Naive thymus-derived CD4-positive, alpha-beta T cell (primary cell): ENCODE measurements at regions of chr5 and their contacts with region 1.

Region 1: GRCh38 chr5:80216753-80217596 is 38.9 kb downstream of the SERINC5 start:
- DNase-seq: peak in 1 of 9 donors; percentile 58
- ATAC-seq: no peak
- H3K4me3 ChIP-seq: peak overlapping the region; percentile 35
- H3K4me3 Mint-ChIP-seq: peak overlapping the region; percentile 45 to 89 (median 81)
- H3K27ac ChIP-seq: peak overlapping the region; percentile 63
- H3K27ac Mint-ChIP-seq: peak overlapping the region in 8 of 9 donors; percentile 83 to 99 (median 93)
- H3K4me1 ChIP-seq: peaks cover 15 to 87% of the 10 kb centered on the region in 2 donors
- H3K4me1 Mint-ChIP-seq: peaks cover 57 to 100% (median 91%) of the 10 kb centered on the region in 7 donors
- H3K27me3 ChIP-seq: no peaks in the 10 kb centered on the region
- H3K27me3 Mint-ChIP-seq: no peaks in the 10 kb centered on the region

Region 2: DNA sequence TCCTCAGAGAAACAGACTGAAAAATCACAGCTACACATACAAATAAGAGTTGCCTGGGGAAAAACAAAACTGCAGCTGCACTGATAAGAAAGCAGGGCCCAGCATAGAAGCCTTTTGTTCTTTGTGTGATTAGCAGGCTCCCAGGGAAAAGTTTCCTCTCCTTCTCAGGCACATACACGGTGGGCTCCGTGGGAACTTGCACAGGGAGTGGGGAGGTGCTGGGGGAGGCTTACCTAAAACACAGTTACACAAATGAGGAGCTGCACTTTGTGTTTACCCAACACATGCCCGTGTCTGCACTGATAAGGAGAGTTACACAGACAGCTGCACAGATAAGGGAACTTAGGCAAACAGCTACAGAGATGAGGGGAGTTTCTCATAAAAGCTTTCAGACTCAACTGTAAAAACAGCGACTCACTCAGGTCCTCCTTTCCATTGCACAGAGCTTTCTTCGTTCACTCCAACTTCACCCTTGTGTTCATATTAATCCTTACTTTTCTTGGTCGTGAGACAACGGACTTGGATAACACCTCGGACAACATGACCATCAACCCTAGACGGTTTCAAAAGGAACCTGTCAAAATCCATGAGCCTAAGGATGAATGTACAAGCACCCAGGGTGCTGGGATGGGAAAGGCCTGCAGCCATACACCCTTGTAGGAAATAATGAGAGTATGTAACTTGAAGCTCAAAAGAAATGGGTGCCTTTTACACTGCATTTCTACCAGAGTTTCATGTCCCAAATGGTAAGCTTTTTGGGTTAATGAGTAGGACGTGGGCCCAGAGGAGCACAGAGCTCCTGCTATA is 12.0 kb before region 1 on chr5:
- CTCF ChIA-PET with region 1: interaction called, 15 read pairs
- POLR2A ChIA-PET with region 1: interaction called, 18 read pairs
- intact Hi-C with region 1: loop called in 1 of 2 experiments (anchors 2 kb)
- DNase-seq: peak in 6 of 9 donors; percentile 44 to 59 (median 49)
- ATAC-seq: peak; percentile 88
- H3K4me3 ChIP-seq: no peak overlapping the region
- H3K4me3 Mint-ChIP-seq: peak overlapping the region in 9 of 10 donors; percentile 58 to 82 (median 73)
- H3K27ac ChIP-seq: peak overlapping the region; percentile 54
- H3K27ac Mint-ChIP-seq: peak overlapping the region; percentile 46 to 99 (median 90)
- H3K4me1 ChIP-seq: peaks cover 10 to 74% of the 10 kb centered on the region in 2 donors
- H3K4me1 Mint-ChIP-seq: peaks cover 45 to 99% (median 91%) of the 10 kb centered on the region in 7 donors
- H3K27me3 ChIP-seq: no peaks in the 10 kb centered on the region
- H3K27me3 Mint-ChIP-seq: no peaks in the 10 kb centered on the region

Region 3: GRCh38 chr5:80229902-80230255 is 12.9 kb after region 1 on chr5:
- CTCF ChIA-PET with region 1: no interaction called
- POLR2A ChIA-PET with region 1: interaction called, 4 read pairs
- intact Hi-C with region 1: loop called in 1 of 2 experiments (anchors 1 kb)
- DNase-seq: no peak
- ATAC-seq: no peak
- H3K4me3 ChIP-seq: no peak overlapping the region
- H3K4me3 Mint-ChIP-seq: peak overlapping the region in 8 of 10 donors; percentile 26 to 72 (median 60)
- H3K27ac ChIP-seq: peak overlapping the region; percentile 34
- H3K27ac Mint-ChIP-seq: peak overlapping the region in 7 of 9 donors; percentile 43 to 91 (median 71)
- H3K4me1 ChIP-seq: peaks cover 10 to 56% of the 10 kb centered on the region in 2 donors
- H3K4me1 Mint-ChIP-seq: peaks cover 58 to 92% (median 80%) of the 10 kb centered on the region in 7 donors
- H3K27me3 ChIP-seq: no peaks in the 10 kb centered on the region
- H3K27me3 Mint-ChIP-seq: no peaks in the 10 kb centered on the region

Region 4: DNA sequence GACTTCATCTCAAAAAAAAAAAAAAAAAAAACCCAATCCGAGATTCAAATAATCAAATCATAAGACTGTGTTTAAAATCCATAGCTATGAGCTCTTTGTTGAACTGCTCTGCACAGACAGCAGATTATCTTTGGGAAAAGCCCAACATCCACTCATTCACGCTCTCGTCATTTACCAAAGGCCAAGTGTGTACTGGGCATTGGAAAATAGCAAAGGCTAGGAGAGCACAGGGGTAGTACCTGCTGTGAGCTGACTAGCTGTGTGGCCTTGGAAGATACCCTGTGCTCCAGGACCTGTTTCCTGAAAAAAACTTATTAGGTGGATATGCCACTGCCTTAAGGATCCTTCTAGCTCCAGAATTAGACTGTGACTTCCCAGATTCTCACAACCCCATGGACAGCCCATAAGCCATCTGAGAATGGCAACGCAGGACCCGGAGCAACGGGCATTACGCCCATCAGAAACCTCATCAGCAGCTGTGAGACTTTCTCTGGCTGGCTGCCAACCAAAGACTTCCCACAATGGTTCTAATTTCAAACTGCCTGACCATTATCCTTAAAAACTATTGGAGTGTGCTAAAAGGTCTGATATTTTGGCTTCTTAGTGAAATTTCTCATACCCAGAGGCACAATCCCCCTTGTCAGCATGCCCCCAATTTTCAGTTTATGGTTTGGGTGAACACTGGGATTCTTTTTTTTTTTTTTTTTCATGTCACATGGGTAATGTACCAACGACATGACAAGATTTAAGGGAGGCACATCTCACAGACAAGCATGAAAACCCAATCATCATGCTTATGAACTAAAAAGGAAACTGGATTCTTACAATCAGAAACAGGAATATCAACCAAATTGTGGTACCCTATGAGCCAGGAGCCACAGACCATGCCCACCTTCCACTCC is 22.1 kb after region 1 on chr5:
- CTCF ChIA-PET with region 1: no interaction called
- POLR2A ChIA-PET with region 1: interaction called, 4 read pairs
- intact Hi-C with region 1: loop called in 1 of 2 experiments (anchors 2 kb)
- DNase-seq: no peak
- ATAC-seq: no peak
- H3K4me3 ChIP-seq: no peak overlapping the region
- H3K4me3 Mint-ChIP-seq: peak overlapping the region in 9 of 10 donors; percentile 59 to 89 (median 73)
- H3K27ac ChIP-seq: peak overlapping the region; percentile 31
- H3K27ac Mint-ChIP-seq: peak overlapping the region in 8 of 9 donors; percentile 72 to 93 (median 84)
- H3K4me1 ChIP-seq: peaks cover 11 to 59% of the 10 kb centered on the region in 2 donors
- H3K4me1 Mint-ChIP-seq: peaks cover 40 to 86% (median 77%) of the 10 kb centered on the region in 7 donors
- H3K27me3 ChIP-seq: no peaks in the 10 kb centered on the region
- H3K27me3 Mint-ChIP-seq: no peaks in the 10 kb centered on the region

Region 5: DNA sequence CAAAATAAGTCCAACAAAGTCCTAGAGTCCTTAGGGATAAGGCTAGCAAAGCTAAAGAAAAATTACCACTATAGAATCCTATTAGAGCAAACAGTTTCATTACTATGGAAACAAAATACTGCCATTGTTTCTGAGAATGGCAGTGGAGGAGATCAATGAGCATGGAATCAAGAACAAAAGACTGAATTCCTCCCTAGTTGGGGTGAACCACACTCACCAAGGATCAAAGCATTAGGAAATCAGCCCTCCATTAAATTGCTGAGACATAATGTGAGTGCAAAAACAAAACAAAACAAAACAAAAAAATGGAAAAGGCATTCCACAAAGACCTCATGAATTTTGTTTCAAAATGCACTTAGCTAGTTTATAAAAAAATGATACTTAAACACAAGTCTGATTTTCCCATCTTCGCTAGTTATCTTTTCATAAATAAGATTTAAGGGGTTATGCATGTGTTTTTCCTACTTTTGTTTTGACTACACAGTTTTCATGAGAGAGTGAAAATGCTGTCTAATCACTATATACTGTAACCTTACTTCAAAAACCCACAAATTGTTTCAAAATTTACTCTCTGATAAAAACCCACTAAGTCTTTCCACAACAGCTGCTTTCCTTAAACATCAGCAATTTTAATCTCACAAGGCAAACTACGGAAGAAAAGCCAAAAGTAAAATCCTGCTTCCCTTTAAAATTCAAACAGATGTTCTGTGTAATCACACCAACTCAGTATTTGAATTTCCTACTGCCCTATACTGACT is 29.2 kb after region 1 on chr5:
- CTCF ChIA-PET with region 1: no interaction called
- POLR2A ChIA-PET with region 1: interaction called, 8 read pairs
- intact Hi-C with region 1: loop called in 1 of 2 experiments (anchors 2 kb)
- DNase-seq: no peak
- ATAC-seq: no peak
- H3K4me3 ChIP-seq: no peak overlapping the region
- H3K4me3 Mint-ChIP-seq: peak overlapping the region in 9 of 10 donors; percentile 18 to 97 (median 52)
- H3K27ac ChIP-seq: peak overlapping the region; percentile 18
- H3K27ac Mint-ChIP-seq: peak overlapping the region; percentile 26 to 92 (median 67)
- H3K4me1 ChIP-seq: peaks cover 11 to 48% of the 10 kb centered on the region in 2 donors
- H3K4me1 Mint-ChIP-seq: peaks cover 45 to 82% (median 65%) of the 10 kb centered on the region in 7 donors
- H3K27me3 ChIP-seq: no peaks in the 10 kb centered on the region
- H3K27me3 Mint-ChIP-seq: no peaks in the 10 kb centered on the region

Region 6: GRCh38 chr5:80275347-80275746 is 58.4 kb after region 1 on chr5:
- CTCF ChIA-PET with region 1: no interaction called
- POLR2A ChIA-PET with region 1: interaction called, 3 read pairs
- intact Hi-C with region 1: loop called in 1 of 2 experiments (anchors 2 kb)
- DNase-seq: peak in 6 of 9 donors; percentile 28 to 65 (median 48)
- ATAC-seq: peak; percentile 57
- H3K4me3 ChIP-seq: no peak overlapping the region
- H3K4me3 Mint-ChIP-seq: no peak overlapping the region
- H3K27ac ChIP-seq: no peak overlapping the region
- H3K27ac Mint-ChIP-seq: peak overlapping the region in 7 of 9 donors; percentile 0 to 75 (median 49)
- H3K4me1 ChIP-seq: peaks cover 0 to 19% of the 10 kb centered on the region in 2 donors
- H3K4me1 Mint-ChIP-seq: peaks cover 12 to 36% (median 27%) of the 10 kb centered on the region in 7 donors
- H3K27me3 ChIP-seq: no peaks in the 10 kb centered on the region
- H3K27me3 Mint-ChIP-seq: no peaks in the 10 kb centered on the region